GM12878 (cell line): ENCODE measurements at regions of chr7 and their contacts with region 1.

Region 1: GRCh38 chr7:94160719-94161435 is 156.7 kb upstream of the BET1 start:
- DNase-seq: peak; percentile 83
- ATAC-seq: peak; percentile 97
- H3K4me3 ChIP-seq: peak overlapping the region; percentile 25; the same call in 1 of the 2 replicates
- H3K27ac ChIP-seq: peak overlapping the region; percentile 37
- H3K4me1 ChIP-seq: peaks cover 6% of the 10 kb centered on the region
- H3K27me3 ChIP-seq: no peaks in the 10 kb centered on the region
- CTCF ChIP-seq: no peak
- EP300 ChIP-seq: peak; percentile 98 to 99
- POLR2A ChIP-seq: no peak
- RAD21 ChIP-seq: no peak

Region 2: DNA sequence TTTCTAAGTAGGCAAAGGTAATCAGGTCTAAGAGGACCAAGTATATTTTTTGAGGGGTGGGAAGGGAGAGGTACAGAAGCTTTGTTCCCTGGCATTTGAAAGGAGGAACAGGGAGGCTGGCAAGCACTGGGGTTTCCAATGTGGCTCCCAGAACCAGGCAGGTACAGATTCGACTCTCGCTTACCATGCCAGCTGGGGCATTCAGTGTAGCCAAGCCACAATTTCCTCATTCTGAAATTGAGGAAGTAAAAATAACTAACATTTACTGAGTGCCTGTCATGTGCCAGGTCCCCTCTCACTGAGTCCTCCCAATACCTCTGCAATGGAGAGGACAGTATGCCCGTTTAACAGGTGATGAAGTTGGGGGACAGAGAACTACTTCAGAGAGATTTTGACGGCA is 110.8 kb before region 1 on chr7:
- CTCF ChIA-PET with region 1: no interaction called
- POLR2A ChIA-PET with region 1: no interaction called
- RAD21 ChIA-PET with region 1: no interaction called
- SMC1A ChIA-PET with region 1: interaction called, 7 read pairs
- in situ Hi-C with region 1: no loop called
- intact Hi-C with region 1: loop called (anchors 5 kb)
- DNase-seq: peak; percentile 63
- ATAC-seq: peak; percentile 89
- H3K4me3 ChIP-seq: no peak overlapping the region
- H3K27ac ChIP-seq: peak overlapping the region; percentile 27; the same call in 1 of the 2 replicates
- H3K4me1 ChIP-seq: peaks cover 23% of the 10 kb centered on the region
- H3K27me3 ChIP-seq: no peaks in the 10 kb centered on the region
- CTCF ChIP-seq: no peak
- EP300 ChIP-seq: peak; percentile 38 to 41; a peak in 2 of 4 replicates
- POLR2A ChIP-seq: no peak
- RAD21 ChIP-seq: no peak

Region 3: DNA sequence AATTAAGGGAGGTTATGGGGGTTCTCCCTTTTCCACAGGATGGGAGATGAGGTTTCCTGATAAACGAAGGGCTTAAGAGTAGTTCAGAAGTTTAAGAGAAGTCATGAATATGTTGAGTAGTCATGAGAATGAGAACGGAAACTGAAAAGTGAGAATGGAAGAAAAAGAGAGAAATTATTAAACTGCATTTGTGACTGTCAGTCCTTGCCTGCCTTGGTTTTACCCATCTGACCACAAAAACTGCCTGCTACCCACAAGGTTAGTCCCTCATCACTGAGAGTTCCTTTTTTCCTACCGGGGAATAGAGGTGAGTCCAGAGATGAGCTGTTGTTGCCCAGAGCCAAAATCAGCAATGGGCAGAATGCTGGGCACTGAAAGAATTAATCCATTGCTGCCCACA is 17.4 kb after region 1 on chr7:
- CTCF ChIA-PET with region 1: interaction called, 9 read pairs
- POLR2A ChIA-PET with region 1: interaction called, 13 read pairs
- RAD21 ChIA-PET with region 1: interaction called, 10 read pairs
- SMC1A ChIA-PET with region 1: interaction called, 29 read pairs
- in situ Hi-C with region 1: no loop called
- intact Hi-C with region 1: loop called (anchors 1 kb)
- DNase-seq: peak; percentile 75
- ATAC-seq: peak; percentile 96
- H3K4me3 ChIP-seq: peak overlapping the region; percentile 17; the same call in 1 of the 2 replicates
- H3K27ac ChIP-seq: no peak overlapping the region
- H3K4me1 ChIP-seq: peaks cover 9% of the 10 kb centered on the region
- H3K27me3 ChIP-seq: no peaks in the 10 kb centered on the region
- CTCF ChIP-seq: no peak
- EP300 ChIP-seq: peak; percentile 45 to 77; a peak in 3 of 4 replicates
- POLR2A ChIP-seq: no peak
- RAD21 ChIP-seq: no peak

Region 4: GRCh38 chr7:94313926-94314325 is 153.0 kb after region 1 on chr7:
- CTCF ChIA-PET with region 1: no interaction called
- POLR2A ChIA-PET with region 1: no interaction called
- RAD21 ChIA-PET with region 1: no interaction called
- SMC1A ChIA-PET with region 1: no interaction called
- in situ Hi-C with region 1: no loop called
- intact Hi-C with region 1: no loop called
- DNase-seq: no peak
- ATAC-seq: no peak
- H3K4me3 ChIP-seq: no peak overlapping the region
- H3K27ac ChIP-seq: no peak overlapping the region
- H3K4me1 ChIP-seq: no peaks in the 10 kb centered on the region
- H3K27me3 ChIP-seq: no peaks in the 10 kb centered on the region
- CTCF ChIP-seq: no peak
- EP300 ChIP-seq: no peak
- POLR2A ChIP-seq: no peak
- RAD21 ChIP-seq: no peak